ENCODE measurements at regions of chr2 and their contacts with region 1.

Region 1: GRCh38 chr2:216139884-216140283 is 30.7 kb downstream of the XRCC5 start:
- DNase-seq: peak; percentile 24
- ATAC-seq: peak; percentile 88
- H3K4me3 Mint-ChIP-seq: no peak overlapping the region
- H3K27ac Mint-ChIP-seq: no peak overlapping the region
- H3K4me1 Mint-ChIP-seq: no peaks in the 10 kb centered on the region
- H3K27me3 Mint-ChIP-seq: no peaks in the 10 kb centered on the region
- CTCF ChIP-seq: peak; percentile 31; the same call in 1 of the 2 replicates

Region 2: DNA sequence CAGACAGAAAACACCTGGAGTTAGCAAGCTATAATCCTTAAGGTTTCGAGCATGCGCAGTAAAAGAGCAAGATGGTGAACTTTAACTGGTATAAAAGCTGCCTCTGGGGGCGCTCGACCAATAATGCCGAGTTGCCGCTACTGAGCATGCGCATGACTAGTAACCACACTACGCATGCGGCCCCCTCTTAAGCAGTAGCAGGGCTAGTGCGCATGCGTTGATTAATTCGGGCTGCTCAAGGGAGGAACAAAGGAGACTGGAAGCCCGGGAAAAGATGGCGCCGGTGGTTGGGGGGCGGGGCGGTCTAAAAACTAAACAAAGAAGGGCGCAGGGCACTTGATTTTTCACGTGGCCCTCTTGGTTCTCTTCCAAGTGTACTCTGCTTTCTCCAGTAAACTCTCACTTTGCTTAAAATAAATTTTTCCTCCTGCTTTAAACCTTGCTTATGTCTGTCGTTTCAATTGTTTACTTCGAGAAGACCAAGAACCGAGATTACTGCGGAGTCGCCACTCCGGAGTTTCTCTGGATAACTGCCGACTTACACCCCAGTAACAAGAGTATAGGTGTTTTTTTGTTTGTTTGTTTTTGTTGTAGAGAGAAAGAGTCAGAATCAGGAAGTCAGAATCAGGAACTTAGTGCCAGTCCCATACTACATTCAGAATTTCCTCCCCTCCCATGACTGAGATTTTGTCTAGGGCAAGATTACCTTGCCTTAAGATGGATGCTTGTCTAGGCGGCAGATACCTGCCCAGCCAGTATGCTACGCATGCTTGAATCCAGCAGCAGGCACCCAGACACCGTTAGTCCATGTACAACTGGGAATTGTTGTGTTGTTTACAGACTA is 24.9 kb before region 1 on chr2:
- CTCF ChIA-PET with region 1: interaction called, 12 read pairs
- POLR2A ChIA-PET with region 1: no interaction called
- DNase-seq: peak; percentile 98
- ATAC-seq: peak; percentile 91
- H3K4me3 Mint-ChIP-seq: peak overlapping the region; percentile 77
- H3K27ac Mint-ChIP-seq: peak overlapping the region; percentile 98
- H3K4me1 Mint-ChIP-seq: peaks cover 47% of the 10 kb centered on the region
- H3K27me3 Mint-ChIP-seq: no peaks in the 10 kb centered on the region
- CTCF ChIP-seq: peak; percentile 89

Measured in WTC11 (cell line).